ENCODE measurements at regions of chr22 and their contacts with region 1.

Region 1: GRCh38 chr22:45096256-45096907 is 67.3 kb upstream of the NUP50 start:
- DNase-seq: no peak
- H3K4me3 ChIP-seq: no peak overlapping the region
- H3K27me3 ChIP-seq: peaks cover 3% of the 10 kb centered on the region
- CTCF ChIP-seq: peak; percentile 95

Region 2: GRCh38 chr22:44940130-44940529 is 156.3 kb before region 1 on chr22:
- CTCF ChIA-PET with region 1: no interaction called
- POLR2A ChIA-PET with region 1: no interaction called
- DNase-seq: no peak
- H3K4me3 ChIP-seq: no peak overlapping the region
- H3K27me3 ChIP-seq: peaks cover 9% of the 10 kb centered on the region; the same call in 1 of the 2 replicates
- CTCF ChIP-seq: no peak

Region 3: DNA sequence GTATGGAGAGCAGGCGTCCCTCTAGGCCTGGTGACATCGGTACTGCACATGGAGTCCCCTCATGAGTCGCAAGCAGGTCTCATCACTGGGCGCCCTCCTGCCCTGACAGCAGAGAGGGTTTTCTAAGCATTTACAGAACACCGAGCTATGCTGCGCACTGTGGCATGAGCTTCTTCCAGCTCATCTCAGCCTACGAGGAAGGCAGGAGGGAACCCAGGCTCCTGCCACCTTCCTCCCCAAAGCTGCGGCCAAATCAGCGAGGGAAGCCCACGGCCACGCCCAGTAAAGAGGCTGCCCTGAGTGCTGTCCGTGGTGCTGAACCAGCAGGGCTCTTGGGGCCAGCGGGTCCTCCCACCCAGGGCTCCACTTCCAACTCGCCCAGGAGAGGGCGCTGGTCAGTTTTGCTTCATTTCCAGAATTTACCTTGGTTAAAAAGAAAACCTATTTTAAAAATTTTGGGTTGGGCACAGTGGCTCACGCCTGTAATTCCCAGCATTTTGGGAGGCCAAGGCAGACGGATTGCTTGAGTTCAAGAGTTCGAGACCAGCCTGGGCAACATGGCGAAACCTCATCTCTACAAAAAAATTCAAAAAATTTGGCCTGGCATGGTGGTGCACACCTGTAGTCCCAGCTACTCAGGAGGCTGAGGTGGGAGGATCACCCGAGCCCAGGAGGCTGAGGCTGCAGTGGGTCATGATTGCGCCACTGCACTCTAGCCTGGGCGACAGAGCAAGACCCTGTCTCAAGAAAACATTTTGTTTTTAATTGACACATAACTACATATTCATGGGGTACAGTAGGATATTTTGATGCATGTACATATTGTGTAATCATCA is 120.7 kb before region 1 on chr22:
- CTCF ChIA-PET with region 1: interaction called, 37 read pairs
- POLR2A ChIA-PET with region 1: no interaction called
- DNase-seq: peak; percentile 4
- H3K4me3 ChIP-seq: no peak overlapping the region
- H3K27me3 ChIP-seq: peaks cover 2% of the 10 kb centered on the region
- CTCF ChIP-seq: peak; percentile 83

Region 4: GRCh38 chr22:45036154-45036553 is 60.2 kb before region 1 on chr22:
- CTCF ChIA-PET with region 1: no interaction called
- POLR2A ChIA-PET with region 1: no interaction called
- DNase-seq: no peak
- H3K4me3 ChIP-seq: no peak overlapping the region
- H3K27me3 ChIP-seq: peaks cover 4% of the 10 kb centered on the region; the same call in 1 of the 2 replicates
- CTCF ChIP-seq: no peak

Region 5: DNA sequence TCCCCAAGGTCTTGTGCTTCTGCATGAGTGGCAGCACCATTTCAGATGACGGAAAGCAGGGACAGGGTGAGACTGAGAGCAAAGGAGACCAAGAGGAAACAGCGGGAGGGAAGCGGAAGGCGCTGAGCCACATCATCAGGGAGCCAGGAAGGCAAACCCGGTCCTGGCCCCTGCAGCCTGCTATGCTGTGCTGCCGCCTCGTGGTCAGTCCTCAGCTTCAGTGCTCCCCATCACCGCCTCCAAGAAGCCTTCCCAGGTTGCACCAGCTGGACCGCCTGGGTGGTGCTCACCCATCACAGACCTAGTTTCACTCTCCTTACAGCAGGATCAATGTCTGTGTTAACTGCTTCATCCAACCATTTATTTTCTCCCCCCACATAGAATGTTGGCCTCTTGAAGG is 13.6 kb before region 1 on chr22:
- CTCF ChIA-PET with region 1: interaction called, 19 read pairs
- POLR2A ChIA-PET with region 1: no interaction called
- DNase-seq: no peak
- H3K4me3 ChIP-seq: no peak overlapping the region
- H3K27me3 ChIP-seq: peaks cover 9% of the 10 kb centered on the region
- CTCF ChIP-seq: peak; percentile 27; the same call in 1 of the 2 replicates

Region 6: GRCh38 chr22:45107671-45108070 is 11.3 kb after region 1 on chr22:
- CTCF ChIA-PET with region 1: interaction called, 22 read pairs
- POLR2A ChIA-PET with region 1: no interaction called
- DNase-seq: no peak
- H3K4me3 ChIP-seq: no peak overlapping the region
- H3K27me3 ChIP-seq: peaks cover 2% of the 10 kb centered on the region
- CTCF ChIP-seq: no peak